Activated B cell treated with CpG ODN at 0.5 μM for 24 hours (primary cell): ENCODE measurements at regions of chr2 and their contacts with region 1.

Region 1: DNA sequence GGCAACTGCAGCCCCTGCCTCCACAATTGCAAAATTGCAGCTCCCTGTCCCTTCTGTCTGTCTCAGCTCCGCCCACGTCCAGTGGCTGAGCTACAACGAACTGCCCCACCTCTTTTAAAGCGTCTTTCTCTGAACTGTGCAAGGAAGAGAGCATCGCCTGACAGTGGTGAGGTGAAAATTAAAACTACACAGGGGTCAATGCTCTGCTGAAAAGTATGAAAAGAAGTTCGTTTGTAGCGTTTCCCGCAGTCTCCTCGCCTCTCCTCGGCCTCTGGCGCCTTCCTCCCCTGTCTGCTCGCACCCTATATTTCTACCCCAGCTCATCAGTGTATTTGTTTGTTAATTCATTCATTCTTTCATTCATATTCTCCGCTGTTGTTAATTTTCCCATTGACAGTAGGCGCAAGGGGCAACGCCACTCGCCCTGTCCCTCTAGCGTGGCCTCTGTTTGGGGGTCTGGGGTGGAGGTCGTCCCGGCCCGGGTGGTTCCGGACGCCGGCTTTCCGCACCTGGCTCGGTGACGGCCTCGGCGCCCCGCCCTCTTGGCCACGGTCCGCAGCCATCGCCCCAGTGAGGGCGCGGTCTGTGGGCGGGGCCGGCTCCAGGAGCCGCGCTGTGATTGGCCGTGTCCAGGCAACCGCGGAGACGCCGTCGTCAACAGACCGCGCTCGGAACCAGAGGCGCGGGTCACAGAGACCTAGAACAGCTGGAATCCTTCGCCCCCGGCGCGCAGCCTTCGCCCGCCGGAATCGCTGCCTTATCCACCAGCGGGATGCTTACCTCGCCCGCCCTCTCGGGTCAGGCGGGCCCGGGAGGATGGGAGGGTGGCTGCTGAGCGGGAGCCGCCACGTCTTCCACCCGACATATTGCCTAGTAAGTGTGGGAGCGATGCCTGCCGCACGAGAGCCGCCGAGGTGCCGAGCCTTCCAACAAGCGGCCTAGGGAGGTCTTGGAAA is at the start of gene VWA3B:
- DNase-seq: peak; percentile 83
- ATAC-seq: peak; percentile 93
- H3K4me3 Mint-ChIP-seq: peak within 1 kb of the TSS; percentile 89
- H3K27ac Mint-ChIP-seq: peak within 1 kb of the TSS; percentile 81
- H3K4me1 Mint-ChIP-seq: peaks cover 49% of the 10 kb centered on the region
- H3K27me3 Mint-ChIP-seq: no peaks in the 10 kb centered on the region
- CTCF ChIP-seq: no peak
- total RNA-seq, gene VWA3B: not detected in 2 replicates

Region 2: GRCh38 chr2:97906307-97906706 is 180.5 kb before region 1 on chr2:
- CTCF ChIA-PET with region 1: no interaction called
- POLR2A ChIA-PET with region 1: interaction called, 3 read pairs
- intact Hi-C with region 1: loop called (anchors 2 kb)
- DNase-seq: no peak
- ATAC-seq: no peak
- H3K4me3 Mint-ChIP-seq: peak overlapping the region; percentile 4
- H3K27ac Mint-ChIP-seq: peak overlapping the region; percentile 92
- H3K4me1 Mint-ChIP-seq: peaks cover 58% of the 10 kb centered on the region
- H3K27me3 Mint-ChIP-seq: no peaks in the 10 kb centered on the region
- CTCF ChIP-seq: no peak

Region 3: GRCh38 chr2:98012561-98012991 is 74.2 kb before region 1 on chr2:
- CTCF ChIA-PET with region 1: no interaction called
- POLR2A ChIA-PET with region 1: interaction called, 5 read pairs
- intact Hi-C with region 1: loop called (anchors 1 kb)
- DNase-seq: peak; percentile 61
- ATAC-seq: peak; percentile 81
- H3K4me3 Mint-ChIP-seq: peak overlapping the region; percentile 79
- H3K27ac Mint-ChIP-seq: peak overlapping the region; percentile 96
- H3K4me1 Mint-ChIP-seq: peaks cover 75% of the 10 kb centered on the region
- H3K27me3 Mint-ChIP-seq: no peaks in the 10 kb centered on the region
- CTCF ChIP-seq: no peak

Region 4: DNA sequence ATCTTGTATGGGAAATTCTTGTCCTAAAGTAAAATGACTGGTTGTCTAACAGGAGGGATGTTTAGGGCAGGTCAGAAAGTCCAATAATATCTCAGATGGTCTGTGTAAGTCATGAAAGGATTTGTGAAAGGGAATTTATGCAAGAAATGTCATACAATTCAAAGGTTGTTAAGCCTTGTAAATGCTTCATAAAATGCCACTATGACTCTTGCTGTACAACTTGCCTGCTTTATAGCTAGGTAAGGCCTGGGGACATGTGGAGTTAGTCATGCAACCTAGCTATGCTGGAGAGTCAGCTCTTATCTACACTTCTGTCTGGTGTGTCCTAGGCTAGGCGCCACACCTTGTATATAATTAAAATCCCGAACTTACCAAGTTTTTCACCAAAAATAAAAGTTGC is 36.7 kb before region 1 on chr2:
- CTCF ChIA-PET with region 1: no interaction called
- POLR2A ChIA-PET with region 1: no interaction called
- intact Hi-C with region 1: no loop called
- DNase-seq: no peak
- ATAC-seq: no peak
- H3K4me3 Mint-ChIP-seq: no peak overlapping the region
- H3K27ac Mint-ChIP-seq: no peak overlapping the region
- H3K4me1 Mint-ChIP-seq: no peaks in the 10 kb centered on the region
- H3K27me3 Mint-ChIP-seq: no peaks in the 10 kb centered on the region
- CTCF ChIP-seq: no peak

Region 5: DNA sequence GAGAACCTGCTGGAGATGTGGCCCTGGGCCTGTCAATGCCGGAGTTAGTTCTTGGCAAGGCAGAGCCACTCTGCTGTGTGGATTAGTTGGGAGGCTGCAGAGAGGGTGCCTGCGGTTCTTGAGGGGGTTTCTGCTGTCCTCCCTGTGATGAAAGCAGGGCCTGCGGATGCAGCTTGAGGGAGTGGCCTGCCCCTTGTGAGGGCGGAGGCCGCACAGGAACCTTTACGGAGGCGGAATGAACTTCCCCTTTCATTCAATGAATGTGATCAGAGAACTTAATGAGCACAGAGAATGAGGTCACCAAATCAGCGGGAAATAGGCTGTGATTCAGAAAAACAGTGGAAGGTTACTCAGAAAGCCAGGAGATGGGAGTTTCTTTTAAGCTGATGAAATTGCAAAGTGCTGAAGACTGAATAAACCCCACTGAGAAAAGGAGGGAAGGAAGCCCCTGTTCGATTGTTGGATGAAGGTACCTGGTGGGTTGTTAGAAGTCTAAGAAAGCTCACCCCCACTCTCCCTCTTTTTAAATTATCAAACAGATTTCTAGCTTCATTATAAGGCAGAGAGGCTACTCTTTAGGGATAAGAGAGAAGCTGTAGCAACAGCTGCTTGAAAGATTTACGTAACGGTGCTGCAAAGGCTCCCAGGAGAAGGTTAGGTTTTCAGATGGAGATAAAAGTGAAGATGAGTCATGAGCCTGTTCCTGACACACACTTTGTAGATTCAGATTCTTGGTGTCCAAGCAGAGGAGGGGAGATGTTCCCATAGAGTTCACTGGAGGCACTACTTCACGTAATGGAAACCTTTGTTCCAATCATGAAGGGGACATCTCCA is 47.6 kb after region 1 on chr2:
- CTCF ChIA-PET with region 1: no interaction called
- POLR2A ChIA-PET with region 1: interaction called, 5 read pairs
- intact Hi-C with region 1: loop called (anchors 1 kb)
- DNase-seq: peak; percentile 60
- ATAC-seq: peak; percentile 99
- H3K4me3 Mint-ChIP-seq: peak overlapping the region; percentile 29
- H3K27ac Mint-ChIP-seq: peak overlapping the region; percentile 18
- H3K4me1 Mint-ChIP-seq: peaks cover 20% of the 10 kb centered on the region
- H3K27me3 Mint-ChIP-seq: no peaks in the 10 kb centered on the region
- CTCF ChIP-seq: no peak

Region 6: GRCh38 chr2:98385050-98385699 is 298.4 kb after region 1 on chr2:
- CTCF ChIA-PET with region 1: interaction called, 3 read pairs
- POLR2A ChIA-PET with region 1: no interaction called
- intact Hi-C with region 1: loop called (anchors 2 kb)
- DNase-seq: peak; percentile 58
- ATAC-seq: peak; percentile 78
- H3K4me3 Mint-ChIP-seq: no peak overlapping the region
- H3K27ac Mint-ChIP-seq: no peak overlapping the region
- H3K4me1 Mint-ChIP-seq: no peaks in the 10 kb centered on the region
- H3K27me3 Mint-ChIP-seq: peaks cover 10% of the 10 kb centered on the region
- CTCF ChIP-seq: peak; percentile 50

Region 7: DNA sequence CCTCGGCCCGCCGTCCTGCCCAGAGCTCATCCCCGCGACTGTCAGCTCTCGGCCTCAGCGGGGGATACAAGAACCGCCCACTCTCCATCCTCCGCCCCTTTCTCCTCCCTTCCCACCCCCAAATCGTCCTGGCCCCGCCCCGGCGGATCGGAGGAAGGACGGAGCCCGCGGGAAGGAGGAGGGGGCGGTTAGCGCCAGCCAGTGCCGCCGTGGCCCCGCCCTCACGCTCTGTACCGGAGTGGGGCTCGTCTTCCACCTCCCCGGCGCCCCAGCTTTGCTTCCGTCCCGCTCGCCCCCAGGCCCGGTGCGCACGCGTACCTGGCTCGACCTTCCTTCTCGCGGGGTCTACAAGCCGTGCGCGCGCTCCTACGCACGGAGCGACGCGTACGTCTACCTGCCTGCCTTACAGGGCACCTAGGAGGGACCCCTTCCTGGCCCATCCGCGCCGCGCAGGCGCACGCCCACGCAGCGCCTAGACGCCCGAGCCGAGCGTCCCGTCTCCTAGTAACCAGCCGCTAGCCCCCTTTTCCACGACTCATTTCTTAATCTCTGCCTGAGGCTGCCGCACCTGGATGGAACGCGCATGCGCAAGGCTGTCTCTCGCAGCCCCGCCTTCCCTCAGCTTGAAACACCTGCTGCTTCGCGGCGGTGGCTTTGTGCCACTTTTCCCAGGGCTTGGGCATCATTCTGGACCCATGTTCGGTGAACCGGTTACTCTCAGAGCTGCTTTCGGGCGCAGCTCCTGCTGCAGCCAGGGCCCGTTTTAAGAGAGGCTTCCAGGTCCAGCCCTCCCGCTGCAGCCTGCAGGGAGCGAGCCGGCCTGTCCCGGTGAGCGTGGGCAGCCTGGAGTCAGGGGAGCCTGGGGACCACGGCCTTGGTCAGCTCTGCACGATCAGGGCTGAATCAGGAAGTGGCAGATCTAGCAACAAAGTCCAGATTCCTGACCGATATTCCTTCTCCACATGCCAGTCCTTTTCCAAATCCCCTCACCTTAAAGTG is 1054.6 kb after region 1 on chr2 and contains the start of gene C2orf15:
- CTCF ChIA-PET with region 1: no interaction called
- POLR2A ChIA-PET with region 1: no interaction called
- intact Hi-C with region 1: loop called (anchors 5 kb)
- DNase-seq: peak; percentile 96
- ATAC-seq: peak; percentile 88
- H3K4me3 Mint-ChIP-seq: peak within 1 kb of the TSS; percentile 97
- H3K27ac Mint-ChIP-seq: peak within 1 kb of the TSS; percentile 96
- H3K4me1 Mint-ChIP-seq: peaks cover 26% of the 10 kb centered on the region
- H3K27me3 Mint-ChIP-seq: no peaks in the 10 kb centered on the region
- CTCF ChIP-seq: no peak
- total RNA-seq, gene C2orf15: 0.69 and 1.2 TPM in 2 replicates